ENCODE measurements at regions of chr12 and their contacts with region 1.

Region 1: DNA sequence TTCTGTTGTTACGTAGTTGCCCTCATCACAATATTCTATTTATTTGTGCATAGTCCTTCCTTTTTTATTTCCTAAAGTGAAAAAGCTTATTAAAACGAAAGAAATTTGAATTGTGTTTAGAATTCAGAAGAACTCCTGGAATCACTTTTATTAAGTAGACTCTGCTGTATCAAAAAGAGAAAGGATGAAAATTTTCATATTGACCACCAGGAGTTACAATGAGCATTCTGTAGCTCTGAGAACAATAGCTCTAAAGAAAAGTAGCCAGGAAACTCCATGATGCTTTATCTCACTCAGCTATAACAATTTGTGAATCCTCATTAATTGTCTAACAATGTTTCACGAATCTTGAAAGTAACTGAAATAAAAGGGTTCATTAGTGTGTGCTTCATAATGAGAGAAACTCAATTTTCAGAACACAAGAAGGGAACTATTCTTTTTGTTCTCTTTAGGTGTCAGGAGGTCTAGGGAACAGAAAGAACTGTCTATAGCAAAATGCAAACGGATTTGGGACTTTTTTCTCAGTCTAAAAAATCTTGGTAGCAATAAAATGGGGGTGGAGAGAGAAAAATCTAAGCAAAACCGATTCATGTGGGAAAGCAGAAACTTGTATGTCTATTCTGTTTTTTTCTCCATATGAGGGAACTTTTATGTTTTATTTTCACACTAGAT is 19.3 kb downstream of the ASCL1 start:
- DNase-seq: no peak
- H3K4me3 ChIP-seq: no peak overlapping the region
- H3K27ac ChIP-seq: no peak overlapping the region
- H3K4me1 ChIP-seq: no peaks in the 10 kb centered on the region
- H3K27me3 ChIP-seq: peaks cover 0 to 2% (median 0%) of the 10 kb centered on the region in 4 experiments; a peak in 2 of 7 replicates
- CTCF ChIP-seq: peak in 1 of 3 experiments; percentile 23; a peak in 2 of 4 replicates
- EP300 ChIP-seq: no peak
- POLR2A ChIP-seq: no peak
- RAD21 ChIP-seq: no peak

Region 2: DNA sequence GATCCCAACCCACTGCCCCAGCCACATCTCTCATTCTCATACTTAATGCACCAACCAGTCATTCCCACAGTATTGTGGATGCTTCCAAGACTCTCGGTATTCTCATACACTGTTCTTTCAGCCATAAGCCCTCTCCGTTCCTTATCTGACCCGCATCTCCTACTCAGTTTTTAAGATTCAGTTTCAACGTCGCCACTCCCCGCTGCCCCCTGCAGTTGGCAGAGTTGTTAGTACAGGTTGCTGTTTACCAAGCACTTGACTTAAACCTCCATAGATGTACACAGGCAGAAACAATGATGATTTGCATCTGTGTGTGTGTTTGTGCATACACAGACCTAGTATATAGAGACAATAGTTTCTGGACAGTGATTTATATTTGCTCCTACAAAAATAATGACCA is 99.9 kb before region 1 on chr12:
- CTCF ChIA-PET with region 1: no interaction called
- POLR2A ChIA-PET with region 1: no interaction called
- DNase-seq: peak in 1 of 2 experiments; percentile 74
- H3K4me3 ChIP-seq: no peak overlapping the region
- H3K27ac ChIP-seq: no peak overlapping the region
- H3K4me1 ChIP-seq: peaks cover 0 to 3% (median 0%) of the 10 kb centered on the region in 4 experiments; a peak in 2 of 7 replicates
- H3K27me3 ChIP-seq: no peaks in the 10 kb centered on the region
- CTCF ChIP-seq: peak; percentile 57 to 68 (median 61)
- EP300 ChIP-seq: no peak
- POLR2A ChIP-seq: no peak
- RAD21 ChIP-seq: peak; percentile 32 to 53

Region 3: GRCh38 chr12:102964872-102965271 is 11.9 kb before region 1 on chr12:
- CTCF ChIA-PET with region 1: interaction called, 24 read pairs
- POLR2A ChIA-PET with region 1: no interaction called
- DNase-seq: peak in 1 of 2 experiments; percentile 69
- H3K4me3 ChIP-seq: peak overlapping the region; percentile 19 to 58 (median 35); a peak in 5 of 8 replicates
- H3K27ac ChIP-seq: no peak overlapping the region
- H3K4me1 ChIP-seq: peaks cover 0 to 15% (median 7%) of the 10 kb centered on the region in 4 experiments; a peak in 4 of 7 replicates
- H3K27me3 ChIP-seq: peaks cover 62 to 87% (median 82%) of the 10 kb centered on the region in 4 experiments
- CTCF ChIP-seq: no peak
- EP300 ChIP-seq: no peak
- POLR2A ChIP-seq: no peak
- RAD21 ChIP-seq: no peak

Measured in H1 (cell line).